ENCODE measurements at regions of chr9 and their contacts with region 1.

Region 1: DNA sequence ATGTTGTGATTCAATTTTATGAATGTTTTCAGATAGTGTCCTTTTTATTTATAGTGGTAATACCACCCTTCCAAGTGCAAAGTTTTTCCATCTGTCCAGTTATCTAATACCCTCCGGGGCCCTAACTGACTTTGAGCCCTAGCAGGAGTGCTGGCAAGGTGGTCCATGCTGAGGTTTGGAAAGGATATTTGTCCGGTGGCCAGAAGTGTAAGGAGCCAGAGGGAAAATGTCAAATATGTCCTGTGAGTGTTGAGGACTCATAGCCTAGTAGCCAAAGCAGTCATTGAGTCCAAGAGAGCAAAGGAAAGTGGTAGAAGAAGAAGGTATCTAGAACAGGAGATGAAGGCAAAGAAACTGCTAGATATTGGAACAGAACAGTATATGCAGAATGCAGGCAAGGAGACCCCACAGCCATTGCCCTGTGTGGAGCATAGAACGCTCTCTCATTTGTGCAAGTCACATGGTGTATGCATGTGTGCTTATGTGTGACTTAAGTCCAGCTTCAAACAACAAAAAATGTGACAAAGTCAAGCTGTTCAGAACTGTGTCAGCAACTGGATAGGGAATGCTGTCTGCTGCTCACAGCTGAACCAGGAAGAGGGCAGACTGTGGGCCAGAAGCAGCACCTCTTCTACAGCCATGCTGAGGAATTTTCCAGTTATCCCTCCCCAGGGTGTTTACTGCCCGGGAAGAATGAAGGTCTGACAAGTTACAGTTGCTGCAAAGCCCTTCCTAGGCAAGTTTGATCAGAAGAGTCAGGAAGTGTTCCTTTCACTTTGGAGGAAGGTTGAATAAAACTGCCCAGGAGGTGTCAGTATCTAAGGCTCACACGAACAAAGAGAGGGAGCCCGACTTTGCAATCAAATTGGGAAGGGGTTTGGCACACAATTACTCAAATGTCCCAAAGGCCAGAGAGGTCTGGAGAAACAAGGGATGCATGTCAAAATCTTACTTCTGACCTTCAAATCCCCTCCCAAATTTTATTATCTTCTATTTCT is 463.3 kb upstream of the DMAC1 start:
- DNase-seq: no peak
- H3K4me3 ChIP-seq: no peak overlapping the region
- H3K27ac ChIP-seq: no peak overlapping the region
- H3K4me1 ChIP-seq: no peaks in the 10 kb centered on the region
- H3K27me3 ChIP-seq: no peaks in the 10 kb centered on the region
- CTCF ChIP-seq: no peak
- EP300 ChIP-seq: no peak
- POLR2A ChIP-seq: no peak

Region 2: DNA sequence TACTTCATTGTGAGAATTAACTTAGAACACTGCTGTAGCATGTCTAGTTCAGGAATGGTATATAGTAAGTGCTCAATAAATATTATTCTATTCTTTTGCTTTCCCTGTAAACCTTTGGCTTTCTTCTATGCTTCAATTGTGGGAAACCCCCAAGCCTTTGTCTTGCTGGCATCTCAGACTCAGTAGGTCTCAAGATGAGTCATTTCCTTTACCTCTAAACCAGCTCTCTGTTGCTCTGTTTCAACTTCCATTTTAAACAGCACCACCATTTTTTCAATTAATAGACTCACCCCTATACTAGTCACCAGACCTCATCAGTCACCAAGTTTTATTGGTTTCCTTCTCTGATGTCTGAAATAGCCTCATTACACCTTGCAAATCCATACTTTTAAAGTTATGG is 506.8 kb before region 1 on chr9:
- in situ Hi-C with region 1: loop called in 1 of 4 experiments (anchors 25 kb)
- intact Hi-C with region 1: no loop called
- DNase-seq: no peak
- H3K4me3 ChIP-seq: no peak overlapping the region
- H3K27ac ChIP-seq: no peak overlapping the region
- H3K4me1 ChIP-seq: no peaks in the 10 kb centered on the region
- H3K27me3 ChIP-seq: no peaks in the 10 kb centered on the region
- CTCF ChIP-seq: no peak
- EP300 ChIP-seq: no peak
- POLR2A ChIP-seq: no peak